Naive thymus-derived CD4-positive, alpha-beta T cell (primary cell): ENCODE measurements at regions of chr15 and their contacts with region 1.

Region 1: GRCh38 chr15:90576711-90577389 is 47.1 kb downstream of the CRTC3 start:
- DNase-seq: no peak
- ATAC-seq: no peak
- H3K4me3 ChIP-seq: no peak overlapping the region
- H3K4me3 Mint-ChIP-seq: peak overlapping the region in 5 of 10 donors; percentile 10 to 76 (median 24)
- H3K27ac ChIP-seq: no peak overlapping the region
- H3K27ac Mint-ChIP-seq: peak overlapping the region; percentile 64 to 88 (median 85)
- H3K4me1 ChIP-seq: peaks cover 19 to 65% of the 10 kb centered on the region in 2 donors
- H3K4me1 Mint-ChIP-seq: peaks cover 50 to 97% (median 78%) of the 10 kb centered on the region in 7 donors
- H3K27me3 ChIP-seq: no peaks in the 10 kb centered on the region
- H3K27me3 Mint-ChIP-seq: no peaks in the 10 kb centered on the region

Region 2: GRCh38 chr15:90586948-90587347 is 10.1 kb after region 1 on chr15:
- CTCF ChIA-PET with region 1: interaction called, 6 read pairs
- POLR2A ChIA-PET with region 1: interaction called, 15 read pairs
- intact Hi-C with region 1: loop called in 1 of 2 experiments (anchors 1 kb)
- DNase-seq: no peak
- ATAC-seq: no peak
- H3K4me3 ChIP-seq: no peak overlapping the region
- H3K4me3 Mint-ChIP-seq: peak overlapping the region in 5 of 10 donors; percentile 10 to 57 (median 37)
- H3K27ac ChIP-seq: no peak overlapping the region
- H3K27ac Mint-ChIP-seq: peak overlapping the region in 8 of 9 donors; percentile 3 to 82 (median 40)
- H3K4me1 ChIP-seq: peaks cover 6 to 36% of the 10 kb centered on the region in 2 donors
- H3K4me1 Mint-ChIP-seq: peaks cover 40 to 77% (median 68%) of the 10 kb centered on the region in 7 donors
- H3K27me3 ChIP-seq: no peaks in the 10 kb centered on the region
- H3K27me3 Mint-ChIP-seq: no peaks in the 10 kb centered on the region